Activated CD4-positive, alpha-beta memory T cell treated with anti-CD3 and anti-CD28 coated beads, Interleukin-2, amount 10 ng/mL, durations not matched to agents 7 days and 5 days (primary cell): ENCODE measurements at regions of chr17 and their contacts with region 1.

Region 1: DNA sequence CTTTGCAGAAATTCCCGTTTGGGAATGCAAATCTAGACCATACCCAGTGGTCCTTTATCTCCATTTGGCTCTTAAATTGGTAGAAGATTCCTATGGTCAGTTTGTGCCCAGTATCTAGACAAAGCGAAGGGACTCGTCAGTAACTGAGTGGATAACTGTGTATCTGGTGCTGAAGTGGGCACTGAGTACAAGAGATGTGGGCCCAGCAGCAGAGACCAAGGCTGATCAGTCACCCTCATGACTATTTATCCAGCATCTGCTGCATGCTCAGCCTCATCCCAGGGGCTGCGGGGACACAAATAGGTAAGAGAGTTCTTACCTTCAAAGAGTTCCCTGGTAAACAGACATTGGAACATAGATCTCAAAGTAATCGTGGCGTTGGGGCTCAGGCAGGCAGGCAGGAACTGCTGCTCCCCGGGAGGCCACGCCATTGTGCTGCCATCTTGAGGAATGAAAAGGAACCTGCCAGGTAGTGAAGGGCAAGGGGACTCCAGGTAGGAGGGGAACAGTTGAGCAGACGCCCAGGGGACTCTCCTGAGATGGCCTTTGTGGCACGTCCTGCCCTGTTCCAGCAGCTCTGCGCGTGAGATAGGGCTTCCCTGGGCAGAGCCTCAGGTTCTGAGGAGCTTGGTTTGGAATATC is 10.3 kb downstream of the NT5M start:
- DNase-seq: peak; percentile 78
- H3K4me3 Mint-ChIP-seq: no peak overlapping the region
- H3K27ac Mint-ChIP-seq: no peak overlapping the region
- H3K4me1 Mint-ChIP-seq: peaks cover 3% of the 10 kb centered on the region
- H3K27me3 Mint-ChIP-seq: no peaks in the 10 kb centered on the region

Region 2: GRCh38 chr17:17269926-17270773 is 43.3 kb before region 1 on chr17:
- CTCF ChIA-PET with region 1: interaction called, 24 read pairs
- POLR2A ChIA-PET with region 1: no interaction called
- DNase-seq: peak; percentile 37
- H3K4me3 Mint-ChIP-seq: no peak overlapping the region
- H3K27ac Mint-ChIP-seq: no peak overlapping the region
- H3K4me1 Mint-ChIP-seq: no peaks in the 10 kb centered on the region
- H3K27me3 Mint-ChIP-seq: no peaks in the 10 kb centered on the region

Region 3: GRCh38 chr17:17325228-17325627 is 11.8 kb after region 1 on chr17:
- CTCF ChIA-PET with region 1: no interaction called
- POLR2A ChIA-PET with region 1: no interaction called
- DNase-seq: no peak
- H3K4me3 Mint-ChIP-seq: no peak overlapping the region
- H3K27ac Mint-ChIP-seq: no peak overlapping the region
- H3K4me1 Mint-ChIP-seq: no peaks in the 10 kb centered on the region
- H3K27me3 Mint-ChIP-seq: no peaks in the 10 kb centered on the region

Region 4: GRCh38 chr17:17401271-17401781 is 87.9 kb after region 1 on chr17:
- CTCF ChIA-PET with region 1: no interaction called
- POLR2A ChIA-PET with region 1: no interaction called
- DNase-seq: no peak
- H3K4me3 Mint-ChIP-seq: no peak overlapping the region
- H3K27ac Mint-ChIP-seq: no peak overlapping the region
- H3K4me1 Mint-ChIP-seq: peaks cover 46% of the 10 kb centered on the region
- H3K27me3 Mint-ChIP-seq: peaks cover 2% of the 10 kb centered on the region